Astrocyte of the cerebellum (primary cell): ENCODE measurements at regions of chr1 and their contacts with region 1.

Region 1: DNA sequence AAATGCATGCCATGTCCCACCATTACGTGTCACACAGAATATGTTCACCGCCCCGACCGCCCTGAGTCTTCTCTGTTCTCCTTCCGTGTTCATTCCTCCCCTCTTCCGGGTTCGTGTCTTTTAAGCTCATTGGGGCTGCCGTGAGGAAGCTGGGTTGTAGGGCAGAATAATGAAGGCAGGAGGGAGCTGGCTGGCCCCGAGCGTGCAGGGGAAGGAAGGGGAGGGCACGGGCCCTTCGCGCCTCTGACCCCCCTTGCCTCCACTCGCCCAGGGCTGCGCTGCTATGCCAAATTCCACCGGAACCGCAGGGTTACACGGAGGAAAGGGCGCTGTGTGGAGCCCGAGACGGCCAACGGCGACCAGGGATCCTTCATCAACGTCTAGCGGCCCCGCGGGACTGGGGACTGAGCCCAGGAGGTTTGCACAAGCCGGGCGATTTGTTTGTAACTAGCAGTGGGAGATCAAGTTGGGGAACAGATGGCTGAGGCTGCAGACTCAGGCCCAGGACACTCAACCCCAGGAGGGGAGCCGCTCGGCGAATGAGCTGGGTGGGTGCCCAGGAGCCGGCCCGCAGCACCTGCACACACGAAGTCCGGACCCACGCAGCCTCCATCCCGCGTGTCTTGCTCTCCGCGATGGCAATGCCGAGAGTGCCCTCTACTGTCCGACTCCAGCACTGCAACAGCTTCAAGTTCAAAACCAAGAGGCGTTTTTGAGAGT is 16.5 kb upstream of the AGTRAP start:
- DNase-seq: peak; percentile 41
- H3K4me3 ChIP-seq: peak overlapping the region; percentile 17
- CTCF ChIP-seq: peak; percentile 99

Region 2: GRCh38 chr1:11661103-11661502 is 58.4 kb before region 1 on chr1:
- in situ Hi-C with region 1: loop called (anchors 10 kb)
- DNase-seq: no peak
- H3K4me3 ChIP-seq: no peak overlapping the region
- CTCF ChIP-seq: no peak

Region 3: GRCh38 chr1:11772458-11772857 is 53.0 kb after region 1 on chr1:
- in situ Hi-C with region 1: loop called (anchors 5 kb)
- DNase-seq: no peak
- H3K4me3 ChIP-seq: no peak overlapping the region
- CTCF ChIP-seq: no peak